WTC11 (cell line): ENCODE measurements at regions of chr14 and their contacts with region 1.

Region 1: GRCh38 chr14:51780006-51780692 is 80.3 kb upstream of the GNG2 start:
- DNase-seq: peak; percentile 81
- ATAC-seq: peak; percentile 60
- H3K4me3 Mint-ChIP-seq: 0 out of 2 replicates have a peak overlapping the region, but pooled peaks have one; percentile 15
- H3K27ac Mint-ChIP-seq: no peak overlapping the region
- H3K4me1 Mint-ChIP-seq: peaks cover 7% of the 10 kb centered on the region
- H3K27me3 Mint-ChIP-seq: no peaks in the 10 kb centered on the region
- CTCF ChIP-seq: peak; percentile 60

Region 2: GRCh38 chr14:51283402-51284085 is 496.6 kb before region 1 on chr14:
- CTCF ChIA-PET with region 1: interaction called, 48 read pairs
- POLR2A ChIA-PET with region 1: interaction called, 4 read pairs
- DNase-seq: no peak
- ATAC-seq: peak; percentile 87
- H3K4me3 Mint-ChIP-seq: no peak overlapping the region
- H3K27ac Mint-ChIP-seq: no peak overlapping the region
- H3K4me1 Mint-ChIP-seq: peaks cover 4% of the 10 kb centered on the region; the same call in 1 of the 2 replicates
- H3K27me3 Mint-ChIP-seq: no peaks in the 10 kb centered on the region
- CTCF ChIP-seq: peak; percentile 52

Region 3: GRCh38 chr14:51369814-51370213 is 410.3 kb before region 1 on chr14:
- CTCF ChIA-PET with region 1: interaction called, 32 read pairs
- POLR2A ChIA-PET with region 1: no interaction called
- DNase-seq: peak; percentile 41
- ATAC-seq: peak; percentile 67; the same call in 1 of the 2 replicates
- H3K4me3 Mint-ChIP-seq: no peak overlapping the region
- H3K27ac Mint-ChIP-seq: no peak overlapping the region
- H3K4me1 Mint-ChIP-seq: no peaks in the 10 kb centered on the region
- H3K27me3 Mint-ChIP-seq: no peaks in the 10 kb centered on the region
- CTCF ChIP-seq: peak; percentile 59

Region 4: DNA sequence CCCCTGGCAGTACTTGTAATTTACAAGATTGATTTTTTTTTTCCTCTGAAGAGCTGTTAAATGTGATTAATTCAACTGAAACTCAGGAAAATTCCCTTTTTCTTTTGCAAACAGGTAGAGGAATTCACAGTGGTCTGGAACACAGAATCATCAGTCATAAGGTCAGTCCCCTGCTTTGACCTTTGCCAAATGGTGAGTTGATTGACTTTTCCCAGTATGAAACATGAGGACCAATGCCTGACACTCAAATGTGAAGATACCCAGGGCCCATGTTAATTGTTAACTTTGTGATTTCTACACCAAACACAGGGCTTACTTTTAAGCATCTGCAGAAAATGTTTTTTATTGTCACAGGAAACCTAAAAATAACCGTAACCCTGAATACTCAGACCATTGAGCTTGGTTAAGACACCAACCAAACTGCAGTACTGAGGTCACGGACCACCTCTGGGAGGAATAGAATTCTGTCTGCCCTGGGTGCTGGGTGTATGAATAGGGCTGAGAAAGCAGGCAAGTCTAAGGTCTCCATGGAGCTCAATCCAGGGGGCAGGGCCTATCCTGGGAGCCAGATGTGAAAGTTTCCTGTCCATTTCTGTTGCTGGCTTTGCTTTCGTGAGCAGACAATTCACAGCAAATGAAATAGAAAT is 347.7 kb before region 1 on chr14:
- CTCF ChIA-PET with region 1: interaction called, 11 read pairs
- POLR2A ChIA-PET with region 1: no interaction called
- DNase-seq: no peak
- ATAC-seq: no peak
- H3K4me3 Mint-ChIP-seq: no peak overlapping the region
- H3K27ac Mint-ChIP-seq: no peak overlapping the region
- H3K4me1 Mint-ChIP-seq: peaks cover 16% of the 10 kb centered on the region
- H3K27me3 Mint-ChIP-seq: peaks cover 15% of the 10 kb centered on the region
- CTCF ChIP-seq: no peak

Region 5: GRCh38 chr14:51651388-51652167 is 128.6 kb before region 1 on chr14 and contains the start of gene FRMD6:
- CTCF ChIA-PET with region 1: interaction called, 16 read pairs
- POLR2A ChIA-PET with region 1: interaction called, 3 read pairs
- DNase-seq: peak; percentile 89
- ATAC-seq: peak; percentile 80
- H3K4me3 Mint-ChIP-seq: peak within 1 kb of the TSS; percentile 93
- H3K27ac Mint-ChIP-seq: peak within 1 kb of the TSS; percentile 79
- H3K4me1 Mint-ChIP-seq: peaks cover 37% of the 10 kb centered on the region
- H3K27me3 Mint-ChIP-seq: no peaks in the 10 kb centered on the region
- CTCF ChIP-seq: peak; percentile 40; the same call in 1 of the 2 replicates
- total RNA-seq, gene FRMD6: 13.3 to 21.8 TPM (median 17.0 TPM) in 3 replicates

Region 6: GRCh38 chr14:51726166-51726899 is 53.8 kb before region 1 on chr14:
- CTCF ChIA-PET with region 1: no interaction called
- POLR2A ChIA-PET with region 1: no interaction called
- DNase-seq: no peak
- ATAC-seq: no peak
- H3K4me3 Mint-ChIP-seq: no peak overlapping the region
- H3K27ac Mint-ChIP-seq: peak overlapping the region; percentile 23
- H3K4me1 Mint-ChIP-seq: peaks cover 5% of the 10 kb centered on the region
- H3K27me3 Mint-ChIP-seq: no peaks in the 10 kb centered on the region
- CTCF ChIP-seq: no peak

Region 7: DNA sequence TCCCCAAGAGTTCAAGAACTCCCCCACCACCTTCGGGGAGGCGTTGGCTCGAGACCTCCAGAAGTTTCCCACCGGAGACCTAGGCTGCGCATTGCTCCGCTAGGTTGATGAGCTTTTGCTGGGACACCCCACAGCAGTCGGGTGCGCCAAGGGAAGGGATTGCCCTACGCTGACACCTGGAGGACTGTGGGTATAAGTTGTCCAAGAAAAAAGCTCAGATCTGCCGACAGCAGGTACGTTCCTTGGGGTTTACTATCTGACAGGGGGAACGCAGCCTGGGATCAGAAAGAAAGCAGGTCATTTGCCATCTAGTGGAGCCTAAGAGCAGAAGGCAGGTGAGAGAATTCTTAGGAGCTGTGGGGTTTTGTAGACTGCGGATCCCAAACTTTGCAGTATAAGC is 29.6 kb before region 1 on chr14:
- CTCF ChIA-PET with region 1: interaction called, 33 read pairs
- POLR2A ChIA-PET with region 1: no interaction called
- DNase-seq: peak; percentile 52
- ATAC-seq: no peak
- H3K4me3 Mint-ChIP-seq: no peak overlapping the region
- H3K27ac Mint-ChIP-seq: no peak overlapping the region
- H3K4me1 Mint-ChIP-seq: no peaks in the 10 kb centered on the region
- H3K27me3 Mint-ChIP-seq: no peaks in the 10 kb centered on the region
- CTCF ChIP-seq: no peak

Region 8: DNA sequence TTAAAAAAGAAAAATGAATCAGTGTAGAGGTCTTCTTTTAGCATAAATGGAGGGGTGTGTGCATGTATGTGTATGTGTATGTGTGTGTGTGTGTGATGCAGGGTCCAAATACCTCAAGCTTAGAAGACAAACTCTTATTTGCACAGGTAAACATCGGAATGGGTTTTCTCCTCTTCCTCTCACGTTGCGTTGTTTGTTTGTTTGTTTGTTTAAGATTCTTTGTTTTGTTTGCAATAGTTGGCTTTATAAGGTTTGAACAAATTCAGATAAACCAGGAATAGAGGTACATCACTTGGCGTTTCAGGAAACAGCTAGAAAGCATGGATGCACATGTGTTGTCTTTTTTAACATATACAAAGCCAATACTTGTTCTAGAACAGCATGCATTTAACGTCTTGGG is 165.6 kb after region 1 on chr14:
- CTCF ChIA-PET with region 1: no interaction called
- POLR2A ChIA-PET with region 1: no interaction called
- DNase-seq: no peak
- ATAC-seq: no peak
- H3K4me3 Mint-ChIP-seq: no peak overlapping the region
- H3K27ac Mint-ChIP-seq: no peak overlapping the region
- H3K4me1 Mint-ChIP-seq: peaks cover 4% of the 10 kb centered on the region; the same call in 1 of the 2 replicates
- H3K27me3 Mint-ChIP-seq: no peaks in the 10 kb centered on the region
- CTCF ChIP-seq: no peak

Region 9: GRCh38 chr14:51979088-51979709 is 199.1 kb after region 1 on chr14:
- CTCF ChIA-PET with region 1: interaction called, 23 read pairs
- POLR2A ChIA-PET with region 1: no interaction called
- DNase-seq: peak; percentile 87
- ATAC-seq: peak; percentile 90
- H3K4me3 Mint-ChIP-seq: no peak overlapping the region
- H3K27ac Mint-ChIP-seq: no peak overlapping the region
- H3K4me1 Mint-ChIP-seq: peaks cover 7% of the 10 kb centered on the region
- H3K27me3 Mint-ChIP-seq: peaks cover 7% of the 10 kb centered on the region
- CTCF ChIP-seq: peak; percentile 95